Right ventricle myocardium inferior (tissue), 1 donor: ENCODE measurements at regions of chr10 and their contacts with region 1.

Region 1: DNA sequence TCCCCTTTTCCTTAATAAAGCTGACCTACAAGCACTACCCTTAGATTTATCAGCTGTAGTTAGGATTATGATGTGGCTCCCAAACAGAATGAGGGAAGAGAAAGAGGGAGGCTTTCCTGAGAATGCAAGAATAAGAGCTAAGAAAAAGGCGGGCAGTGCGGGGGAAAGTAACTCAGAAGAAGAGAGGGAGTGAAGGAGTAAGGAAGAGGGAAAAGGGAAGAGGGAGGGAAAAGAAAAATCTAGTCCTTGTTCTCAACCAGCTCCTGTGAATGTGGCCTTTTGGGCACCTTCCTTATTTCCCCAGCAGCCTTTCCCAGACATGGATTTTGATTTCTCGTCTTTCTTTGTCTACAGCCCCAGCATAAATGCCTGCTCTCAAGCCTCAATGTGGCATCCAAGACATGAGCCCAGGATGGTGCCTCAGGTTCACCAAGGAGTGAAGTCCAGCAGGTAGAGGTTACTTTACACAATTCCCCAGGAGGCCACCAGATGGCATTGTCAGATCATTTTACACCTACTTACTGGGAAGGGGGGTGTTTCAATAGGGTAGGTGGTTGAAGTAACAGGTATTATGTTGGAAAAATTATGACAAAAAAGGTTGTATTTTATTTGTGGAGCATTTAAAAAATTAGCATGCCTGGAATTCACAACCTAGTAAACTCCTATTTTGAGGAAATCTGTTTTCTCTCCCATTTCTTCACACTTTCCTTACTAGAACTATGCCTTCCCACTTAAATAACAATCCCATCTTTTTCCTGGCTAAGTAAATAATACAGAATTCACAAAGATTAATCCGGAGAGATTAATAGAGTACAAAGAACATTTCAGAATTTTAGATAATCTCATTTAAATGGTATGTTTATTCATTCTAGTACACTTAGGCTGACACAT is 106.5 kb downstream of the HTR7 start:
- DNase-seq: no peak
- ATAC-seq: no peak

Region 2: GRCh38 chr10:90862908-90863514 is 111.7 kb after region 1 on chr10:
- intact Hi-C with region 1: loop called (anchors 5 kb)
- DNase-seq: no peak
- ATAC-seq: no peak